HEK293 (cell line): ENCODE measurements at regions of chr6 and their contacts with region 1.

Region 1: GRCh38 chr6:53718597-53719460 is 53.3 kb upstream of the KLHL31 start:
- H3K4me3 ChIP-seq: no peak overlapping the region
- H3K27ac ChIP-seq: no peak overlapping the region
- H3K4me1 ChIP-seq: peaks cover 2% of the 10 kb centered on the region; the same call in 1 of the 2 replicates
- CTCF ChIP-seq: 0 out of 2 replicates have a peak, but pooled peaks have one; percentile 40

Region 2: GRCh38 chr6:53658992-53659391 is 59.8 kb before region 1 on chr6:
- CTCF ChIA-PET with region 1: interaction called, 12 read pairs
- POLR2A ChIA-PET with region 1: no interaction called
- H3K4me3 ChIP-seq: no peak overlapping the region
- H3K27ac ChIP-seq: no peak overlapping the region
- H3K4me1 ChIP-seq: no peaks in the 10 kb centered on the region
- CTCF ChIP-seq: no peak

Region 3: DNA sequence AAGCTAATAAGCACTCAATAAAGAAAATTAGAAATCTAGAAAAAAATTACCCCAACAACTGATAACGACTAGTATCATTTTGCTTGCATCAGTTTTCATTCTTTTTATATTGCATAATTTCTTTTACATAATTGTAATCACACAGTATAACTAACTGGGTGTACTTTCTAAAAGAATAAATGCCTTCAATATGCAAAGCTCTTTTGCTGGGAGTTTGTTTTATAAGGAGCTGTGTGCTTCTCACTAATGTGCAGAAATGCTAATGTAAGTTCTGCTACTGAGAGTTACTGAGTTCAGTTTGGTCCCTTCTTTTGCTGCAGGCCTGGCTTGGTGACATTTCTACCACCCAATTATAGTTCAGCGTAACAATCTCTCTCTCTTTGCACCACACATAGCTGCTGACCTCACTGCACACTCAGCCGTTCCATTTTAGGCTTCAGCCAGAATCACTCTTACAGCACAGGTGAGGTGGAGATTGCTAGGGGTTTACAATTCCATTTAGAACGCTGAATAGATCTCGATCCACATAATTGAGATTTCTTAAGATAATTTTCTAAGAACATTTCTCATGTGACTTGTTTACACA is 32.4 kb before region 1 on chr6:
- CTCF ChIA-PET with region 1: interaction called, 19 read pairs
- POLR2A ChIA-PET with region 1: interaction called, 3 read pairs
- H3K4me3 ChIP-seq: no peak overlapping the region
- H3K27ac ChIP-seq: no peak overlapping the region
- H3K4me1 ChIP-seq: peaks cover 3% of the 10 kb centered on the region; the same call in 1 of the 2 replicates
- CTCF ChIP-seq: no peak

Region 4: DNA sequence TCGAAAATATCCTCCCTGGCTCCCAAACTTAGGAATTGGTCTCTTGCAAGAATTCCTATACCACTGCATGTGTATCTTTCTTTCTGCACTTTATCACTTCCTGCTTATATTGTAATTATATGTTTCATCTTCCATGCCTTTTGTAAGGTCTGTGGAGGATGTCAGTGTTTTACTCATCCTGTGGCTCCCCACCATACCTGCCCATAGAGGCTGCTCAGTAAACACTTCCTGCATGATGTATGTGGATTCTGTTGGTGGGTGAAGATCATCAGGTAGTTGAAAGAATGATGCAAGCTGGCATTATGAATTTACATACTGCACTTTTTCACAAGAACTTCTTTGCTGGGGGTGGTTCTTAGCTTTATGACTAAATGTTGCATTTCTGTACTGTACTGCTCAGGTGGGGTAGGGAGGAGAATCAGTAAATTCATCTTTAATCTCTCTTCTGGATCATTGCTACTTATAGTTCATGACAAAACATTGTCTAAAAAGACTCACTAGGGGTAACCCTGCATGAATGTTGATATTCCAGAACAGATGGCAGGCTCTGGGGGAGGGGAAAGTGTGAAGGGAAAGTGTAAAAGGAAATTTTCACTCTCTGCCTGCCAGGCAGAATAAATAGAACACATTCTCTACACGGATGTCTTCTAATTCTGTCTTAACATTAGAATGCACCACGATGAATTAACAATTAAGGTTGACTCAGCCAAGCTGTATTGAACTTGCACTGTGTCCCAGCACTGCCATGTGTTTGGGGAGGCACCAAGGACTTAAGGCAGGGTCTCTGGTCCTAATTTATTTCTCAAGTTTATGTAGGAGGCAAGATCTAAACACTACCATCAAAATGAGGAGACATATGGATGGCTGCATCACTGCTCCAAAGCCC is 17.3 kb before region 1 on chr6:
- CTCF ChIA-PET with region 1: interaction called, 48 read pairs
- POLR2A ChIA-PET with region 1: no interaction called
- H3K4me3 ChIP-seq: no peak overlapping the region
- H3K27ac ChIP-seq: no peak overlapping the region
- H3K4me1 ChIP-seq: no peaks in the 10 kb centered on the region
- CTCF ChIP-seq: no peak

Region 5: DNA sequence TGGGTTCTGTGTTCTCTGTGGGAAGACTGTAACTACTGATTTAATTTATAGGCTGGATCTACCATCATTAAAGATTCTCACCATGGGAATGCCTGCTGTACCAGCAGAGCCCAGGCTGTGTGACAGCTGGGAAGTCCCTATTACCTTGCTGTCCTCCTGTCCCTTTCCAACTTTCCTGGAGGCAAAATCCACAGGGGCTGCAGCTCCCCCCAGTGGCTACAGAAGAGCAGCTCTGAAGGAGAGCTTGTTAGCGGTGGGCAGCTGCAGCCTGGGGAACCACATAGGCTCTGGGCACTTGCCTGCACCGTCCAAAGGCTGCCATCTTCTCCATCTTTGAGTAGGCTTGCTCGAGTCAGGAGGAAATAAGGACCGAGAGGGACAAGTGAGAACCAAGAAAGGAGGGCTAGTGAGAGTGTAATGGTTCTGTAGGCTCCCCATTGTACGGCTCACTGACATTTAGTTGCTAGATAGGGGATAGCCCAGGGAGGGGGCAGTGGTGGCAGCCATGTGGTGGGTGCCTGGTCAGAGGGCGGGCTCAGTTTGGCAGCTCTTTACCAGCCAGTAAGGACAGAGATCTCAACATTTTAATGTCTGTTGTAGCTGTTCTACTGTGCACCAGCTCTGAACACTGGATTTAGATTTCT is 237.4 kb after region 1 on chr6:
- CTCF ChIA-PET with region 1: interaction called, 190 read pairs
- POLR2A ChIA-PET with region 1: interaction called, 6 read pairs
- H3K4me3 ChIP-seq: no peak overlapping the region
- H3K27ac ChIP-seq: no peak overlapping the region
- H3K4me1 ChIP-seq: no peaks in the 10 kb centered on the region
- CTCF ChIP-seq: peak; percentile 85; the same call in 1 of the 2 replicates